Activated CD8-positive, alpha-beta T cell treated with anti-CD3 and anti-CD28 coated beads for 36 hours (primary cell): ENCODE measurements at regions of chrX and their contacts with region 1.

Region 1: DNA sequence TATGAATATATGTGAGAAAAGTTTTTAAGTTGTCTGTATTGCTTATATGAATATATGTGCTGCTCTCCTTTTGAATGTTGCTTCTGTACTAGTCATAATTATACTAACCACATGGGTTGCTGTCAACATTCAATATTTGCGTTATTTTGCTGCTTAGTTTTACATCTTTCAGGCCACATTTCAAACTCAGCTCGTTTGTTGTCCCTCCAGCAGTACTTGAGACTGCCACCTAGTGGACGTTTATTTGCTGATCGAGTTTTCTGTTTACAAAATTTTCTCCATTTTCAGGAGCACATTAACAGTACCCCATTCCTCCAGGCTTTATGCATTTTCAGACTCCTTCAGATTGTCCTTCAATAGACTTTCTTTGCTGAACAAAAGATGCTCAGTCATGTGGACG is 75.8 kb downstream of the NUDT11 start:
- DNase-seq: peak; percentile 13
- ATAC-seq: peak; percentile 58
- H3K4me3 Mint-ChIP-seq: no peak overlapping the region
- H3K27ac Mint-ChIP-seq: no peak overlapping the region
- H3K4me1 Mint-ChIP-seq: peaks cover 8% of the 10 kb centered on the region
- H3K27me3 Mint-ChIP-seq: no peaks in the 10 kb centered on the region
- CTCF ChIP-seq: peak; percentile 62

Region 2: DNA sequence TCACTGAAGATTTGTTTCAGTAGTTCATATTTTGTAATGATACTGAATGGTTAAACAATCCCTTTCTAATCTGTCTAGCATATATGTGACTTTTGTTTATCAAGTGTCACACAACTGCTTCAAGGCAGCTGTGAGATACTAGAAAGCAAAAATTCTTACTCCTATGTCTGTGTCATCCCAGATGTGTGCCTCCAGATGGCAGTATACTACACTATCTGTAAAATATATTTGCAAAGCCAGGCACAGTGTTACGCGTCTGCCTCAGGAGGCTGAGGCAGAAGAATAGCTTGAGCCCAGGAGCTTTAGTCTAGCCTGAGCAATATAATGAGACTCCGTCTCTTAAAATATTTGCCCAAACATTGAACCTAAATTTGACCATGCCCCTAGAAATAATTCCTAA is 84.0 kb before region 1 on chrX:
- CTCF ChIA-PET with region 1: interaction called, 83 read pairs
- POLR2A ChIA-PET with region 1: no interaction called
- intact Hi-C with region 1: loop called (anchors 5 kb)
- DNase-seq: peak; percentile 29
- ATAC-seq: peak; percentile 69
- H3K4me3 Mint-ChIP-seq: no peak overlapping the region
- H3K27ac Mint-ChIP-seq: no peak overlapping the region
- H3K4me1 Mint-ChIP-seq: peaks cover 3% of the 10 kb centered on the region
- H3K27me3 Mint-ChIP-seq: no peaks in the 10 kb centered on the region
- CTCF ChIP-seq: peak; percentile 40